Caki2 (cell line): ENCODE measurements at regions of chr6 and their contacts with region 1.

Region 1: DNA sequence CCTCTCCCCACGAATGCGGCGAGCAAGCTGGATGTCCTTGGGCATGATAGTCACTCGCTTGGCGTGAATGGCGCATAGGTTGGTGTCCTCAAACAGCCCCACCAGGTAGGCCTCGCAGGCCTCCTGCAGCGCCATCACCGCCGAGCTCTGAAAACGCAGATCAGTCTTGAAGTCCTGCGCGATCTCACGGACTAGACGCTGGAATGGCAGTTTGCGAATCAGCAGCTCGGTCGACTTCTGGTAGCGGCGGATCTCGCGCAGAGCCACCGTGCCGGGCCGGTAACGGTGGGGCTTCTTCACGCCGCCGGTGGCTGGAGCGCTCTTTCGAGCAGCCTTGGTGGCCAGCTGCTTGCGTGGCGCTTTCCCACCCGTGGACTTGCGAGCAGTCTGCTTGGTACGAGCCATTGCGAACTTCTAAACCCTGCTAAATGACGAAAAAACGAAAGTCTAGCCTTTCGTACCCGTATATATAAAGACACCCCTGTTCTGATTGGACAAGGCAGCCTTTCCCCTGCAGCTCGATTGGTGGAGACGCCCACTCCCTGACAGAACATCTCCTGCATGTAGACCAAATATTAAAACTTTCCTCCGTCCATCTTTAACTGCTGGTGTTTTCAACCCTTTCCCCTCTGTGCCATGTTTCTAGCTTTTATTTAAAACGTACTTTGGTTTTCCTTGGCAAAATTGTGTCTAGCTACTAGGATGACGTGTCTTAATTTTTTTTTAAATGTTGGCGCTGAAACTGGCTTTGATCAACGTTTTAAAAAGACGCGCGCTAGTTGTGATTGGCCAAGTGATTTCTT is 109.8 kb downstream of the HFE start:
- DNase-seq: peak; percentile 94

Region 2: GRCh38 chr6:25934735-25935306 is 262.2 kb before region 1 on chr6:
- in situ Hi-C with region 1: no loop called
- DNase-seq: no peak

Region 3: GRCh38 chr6:26065952-26066380 is 131.1 kb before region 1 on chr6:
- in situ Hi-C with region 1: loop called (anchors 10 kb)
- DNase-seq: peak; percentile 92